CD8-positive, alpha-beta T cell (primary cell): ENCODE measurements at regions of chr4 and their contacts with region 1.

Region 1: DNA sequence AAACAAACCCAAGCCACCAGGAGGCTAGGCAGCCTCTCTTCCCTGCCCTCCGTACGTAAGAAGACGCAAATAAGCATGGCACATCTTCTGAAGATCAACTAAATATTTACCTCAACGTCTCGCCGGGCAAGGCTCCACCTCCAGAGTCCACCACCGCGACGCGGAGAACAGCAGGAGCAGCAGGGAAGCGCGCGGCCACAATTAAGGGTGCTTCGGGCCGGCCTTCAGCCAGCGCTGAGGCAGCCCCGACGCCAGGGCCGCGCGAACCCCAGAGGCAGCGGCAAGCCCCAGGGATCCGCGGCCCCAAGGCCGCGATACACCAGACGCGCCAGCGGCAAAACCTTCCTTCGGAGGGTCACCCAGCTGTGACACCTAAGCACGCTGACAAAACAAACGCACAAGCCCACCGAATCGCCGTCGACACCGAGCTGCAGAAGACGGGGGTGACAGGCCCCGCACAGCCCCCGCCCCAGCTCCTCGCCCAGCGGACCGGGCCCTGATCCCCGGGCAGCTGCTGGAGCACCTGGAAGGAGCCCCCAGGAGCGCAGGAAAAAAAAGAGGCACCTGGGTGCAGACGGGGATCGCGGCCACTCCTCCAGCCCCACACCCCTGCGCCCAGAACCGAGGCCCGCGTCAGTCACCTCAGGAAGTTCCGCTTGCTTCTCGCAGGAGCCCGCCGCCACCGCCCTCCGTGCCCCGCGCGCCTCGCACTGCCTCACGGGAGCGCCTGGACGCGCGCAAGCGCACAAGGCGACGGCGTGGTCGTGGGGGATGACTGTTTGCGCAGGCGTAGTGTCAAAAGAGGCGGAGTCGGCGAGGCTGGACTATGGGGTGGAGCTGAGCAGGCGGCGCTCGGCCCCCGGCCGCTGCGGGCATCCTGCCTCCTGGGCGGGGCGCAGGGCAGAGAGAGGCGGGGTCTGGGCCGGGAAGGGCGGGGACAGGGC is at the starts of genes HAUS3 and POLN:
- DNase-seq: peak; percentile 98 to 100 (median 99)
- ATAC-seq: peak; percentile 90
- H3K4me3 ChIP-seq: peak within 1 kb of the TSS; percentile 89 to 93
- H3K4me3 Mint-ChIP-seq: peak within 1 kb of the TSS; percentile 82
- H3K27ac ChIP-seq: peak within 1 kb of the TSS; percentile 86 to 88
- H3K27ac Mint-ChIP-seq: peak within 1 kb of the TSS; percentile 85
- H3K4me1 ChIP-seq: peaks cover 40% of the 10 kb centered on the region
- H3K4me1 Mint-ChIP-seq: peaks cover 56% of the 10 kb centered on the region
- H3K27me3 ChIP-seq: no peaks in the 10 kb centered on the region
- H3K27me3 Mint-ChIP-seq: no peaks in the 10 kb centered on the region
- CTCF ChIP-seq: no peak
- total RNA-seq, gene HAUS3: 154 TPM
- total RNA-seq, gene POLN: 0.89 to 1.7 TPM

Region 2: DNA sequence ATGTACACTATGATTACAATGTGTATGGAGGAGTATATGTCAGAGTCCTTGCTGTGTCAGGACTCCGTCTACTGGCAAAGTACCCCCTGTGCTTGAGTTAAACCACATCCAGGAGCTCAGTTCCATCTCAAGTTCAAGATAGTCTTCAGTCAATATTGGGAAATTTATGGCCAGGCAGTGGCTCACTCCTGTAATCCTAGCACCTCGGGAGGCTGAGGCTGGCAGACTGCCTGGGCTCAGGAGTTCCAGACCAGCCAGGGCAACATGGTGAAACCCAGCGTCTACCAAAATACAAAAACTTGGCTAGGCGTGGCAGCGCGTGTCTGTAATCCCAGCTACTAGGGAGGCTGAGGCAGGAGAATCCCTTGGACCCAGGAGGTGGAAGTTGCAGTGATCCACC is 535.3 kb before region 1 on chr4:
- CTCF ChIA-PET with region 1: no interaction called
- POLR2A ChIA-PET with region 1: no interaction called
- intact Hi-C with region 1: no loop called
- DNase-seq: no peak
- ATAC-seq: no peak
- H3K4me3 ChIP-seq: no peak overlapping the region
- H3K4me3 Mint-ChIP-seq: no peak overlapping the region
- H3K27ac ChIP-seq: no peak overlapping the region
- H3K27ac Mint-ChIP-seq: no peak overlapping the region
- H3K4me1 ChIP-seq: peaks cover 20% of the 10 kb centered on the region
- H3K4me1 Mint-ChIP-seq: peaks cover 58% of the 10 kb centered on the region
- H3K27me3 ChIP-seq: no peaks in the 10 kb centered on the region
- H3K27me3 Mint-ChIP-seq: no peaks in the 10 kb centered on the region
- CTCF ChIP-seq: no peak

Region 3: DNA sequence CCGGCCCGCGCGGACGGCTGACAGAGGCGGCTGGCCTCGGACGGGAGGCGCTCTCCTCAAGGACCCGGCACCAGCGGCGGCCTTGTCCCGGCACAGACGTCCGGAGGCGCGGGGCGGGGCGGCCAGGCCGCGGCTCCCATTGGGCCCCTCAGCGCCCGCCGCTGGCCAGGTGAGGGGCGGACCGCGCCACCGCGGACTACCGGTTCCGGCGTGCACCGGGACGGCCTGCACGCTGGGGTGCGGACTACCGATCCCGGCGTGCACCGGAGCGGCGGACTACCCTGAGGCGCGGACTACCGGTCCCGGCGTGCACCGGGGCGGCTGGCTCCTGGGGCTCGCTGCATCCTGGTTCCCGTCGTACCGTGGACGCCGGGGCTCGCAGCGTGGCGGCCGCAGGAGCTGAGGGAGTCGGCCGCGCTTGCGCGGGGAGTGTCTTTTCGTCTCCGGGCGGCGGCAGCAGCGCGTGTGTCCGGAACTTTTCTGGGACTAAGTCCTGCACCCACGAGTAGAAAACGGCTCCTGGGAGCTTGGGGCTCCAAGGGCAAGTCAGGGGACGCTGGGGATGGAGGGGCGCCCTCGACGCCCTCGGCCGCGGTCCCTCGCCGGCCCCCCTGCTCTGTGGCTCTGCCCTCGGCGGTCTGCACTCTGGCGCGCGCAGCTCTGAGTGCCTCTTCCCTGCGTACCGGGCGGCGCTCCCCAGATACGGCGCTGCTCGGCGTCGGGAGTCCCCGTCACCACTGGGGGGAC is 385.5 kb before region 1 on chr4 and contains the start of gene LETM1:
- CTCF ChIA-PET with region 1: no interaction called
- POLR2A ChIA-PET with region 1: no interaction called
- intact Hi-C with region 1: loop called in 1 of 2 experiments (anchors 10 kb)
- DNase-seq: peak; percentile 73 to 96 (median 92)
- ATAC-seq: peak; percentile 96
- H3K4me3 ChIP-seq: peak within 1 kb of the TSS; percentile 83 to 91
- H3K4me3 Mint-ChIP-seq: peak within 1 kb of the TSS; percentile 80
- H3K27ac ChIP-seq: peak within 1 kb of the TSS; percentile 47 to 50
- H3K27ac Mint-ChIP-seq: peak within 1 kb of the TSS; percentile 45
- H3K4me1 ChIP-seq: peaks cover 19% of the 10 kb centered on the region
- H3K4me1 Mint-ChIP-seq: peaks cover 44% of the 10 kb centered on the region
- H3K27me3 ChIP-seq: no peaks in the 10 kb centered on the region
- H3K27me3 Mint-ChIP-seq: no peaks in the 10 kb centered on the region
- CTCF ChIP-seq: no peak
- total RNA-seq, gene LETM1: 22.7 to 25.9 TPM

Region 4: DNA sequence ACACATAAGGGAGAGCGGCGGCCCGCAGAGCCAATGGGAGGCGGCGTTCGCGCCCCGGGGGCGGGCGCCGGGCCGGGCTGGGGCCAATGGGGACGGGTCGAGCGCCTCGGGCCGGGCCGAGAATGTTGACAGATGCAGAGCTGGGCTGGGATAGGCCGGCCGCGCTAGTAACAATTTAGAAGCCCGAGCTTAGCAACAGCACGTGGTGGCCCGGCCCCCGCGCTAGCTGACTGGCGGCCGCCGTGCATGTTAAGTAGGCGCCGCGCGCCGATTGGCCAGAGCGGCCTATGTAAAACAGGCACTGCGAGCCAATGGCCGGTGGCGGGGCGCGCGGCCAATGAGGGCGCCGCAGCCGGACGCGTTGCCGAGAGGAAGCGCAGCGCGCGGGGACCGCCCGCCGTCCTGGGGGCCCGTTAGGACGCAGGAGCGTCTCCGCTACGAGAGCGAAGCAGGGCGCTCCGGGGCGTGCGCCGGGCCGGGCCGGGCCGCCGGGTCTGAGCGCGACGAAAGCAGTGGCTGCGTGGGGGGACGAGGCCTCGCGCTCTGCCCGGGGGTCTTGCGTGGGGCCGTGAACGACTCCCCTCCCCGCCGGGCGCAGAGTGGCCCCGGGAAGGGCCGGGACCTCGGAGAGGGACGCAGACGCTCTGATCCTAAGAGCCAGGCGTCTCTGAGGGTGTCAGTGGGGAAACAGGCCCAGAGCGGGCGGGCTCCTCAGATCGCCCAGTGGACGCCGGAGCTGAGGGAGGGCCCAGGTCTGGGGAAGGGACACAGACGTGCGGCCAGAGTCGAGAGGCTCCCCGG is 20.7 kb after region 1 on chr4:
- CTCF ChIA-PET with region 1: interaction called, 6 read pairs
- POLR2A ChIA-PET with region 1: interaction called, 26 read pairs
- intact Hi-C with region 1: loop called (anchors 1 kb)
- DNase-seq: peak; percentile 95 to 99 (median 97)
- ATAC-seq: peak; percentile 87
- H3K4me3 ChIP-seq: peak overlapping the region; percentile 67 to 90
- H3K4me3 Mint-ChIP-seq: peak overlapping the region; percentile 78
- H3K27ac ChIP-seq: peak overlapping the region; percentile 93 to 95
- H3K27ac Mint-ChIP-seq: peak overlapping the region; percentile 85
- H3K4me1 ChIP-seq: peaks cover 25% of the 10 kb centered on the region
- H3K4me1 Mint-ChIP-seq: peaks cover 15% of the 10 kb centered on the region
- H3K27me3 ChIP-seq: no peaks in the 10 kb centered on the region
- H3K27me3 Mint-ChIP-seq: no peaks in the 10 kb centered on the region
- CTCF ChIP-seq: no peak

Region 5: DNA sequence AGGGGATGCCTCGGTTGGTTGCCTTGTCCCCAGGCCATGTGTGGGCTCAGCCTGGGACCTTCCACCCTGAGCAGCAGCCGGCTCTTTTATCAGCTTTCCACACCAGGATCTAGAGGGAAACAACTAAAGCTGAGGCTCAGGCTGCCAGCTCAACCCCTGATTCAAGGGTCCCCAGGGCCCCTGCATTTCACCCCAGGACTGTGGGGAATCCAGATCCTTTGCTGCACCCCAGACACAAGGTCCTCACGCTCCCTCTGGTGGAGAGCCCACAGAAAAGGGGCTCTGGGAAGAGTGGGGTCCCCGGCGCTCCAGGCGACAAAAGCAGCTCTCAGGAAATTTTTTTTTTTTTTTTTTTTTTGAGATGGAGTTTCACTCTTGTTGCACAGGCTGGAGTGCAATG is 112.4 kb after region 1 on chr4:
- CTCF ChIA-PET with region 1: interaction called, 10 read pairs
- POLR2A ChIA-PET with region 1: interaction called, 3 read pairs
- intact Hi-C with region 1: loop called in 1 of 2 experiments (anchors 5 kb)
- DNase-seq: peak in 6 of 9 experiments; percentile 35 to 70 (median 53)
- ATAC-seq: peak; percentile 73
- H3K4me3 ChIP-seq: no peak overlapping the region
- H3K4me3 Mint-ChIP-seq: no peak overlapping the region
- H3K27ac ChIP-seq: no peak overlapping the region
- H3K27ac Mint-ChIP-seq: no peak overlapping the region
- H3K4me1 ChIP-seq: peaks cover 15% of the 10 kb centered on the region
- H3K4me1 Mint-ChIP-seq: peaks cover 9% of the 10 kb centered on the region
- H3K27me3 ChIP-seq: no peaks in the 10 kb centered on the region
- H3K27me3 Mint-ChIP-seq: no peaks in the 10 kb centered on the region
- CTCF ChIP-seq: peak; percentile 49

Region 6: DNA sequence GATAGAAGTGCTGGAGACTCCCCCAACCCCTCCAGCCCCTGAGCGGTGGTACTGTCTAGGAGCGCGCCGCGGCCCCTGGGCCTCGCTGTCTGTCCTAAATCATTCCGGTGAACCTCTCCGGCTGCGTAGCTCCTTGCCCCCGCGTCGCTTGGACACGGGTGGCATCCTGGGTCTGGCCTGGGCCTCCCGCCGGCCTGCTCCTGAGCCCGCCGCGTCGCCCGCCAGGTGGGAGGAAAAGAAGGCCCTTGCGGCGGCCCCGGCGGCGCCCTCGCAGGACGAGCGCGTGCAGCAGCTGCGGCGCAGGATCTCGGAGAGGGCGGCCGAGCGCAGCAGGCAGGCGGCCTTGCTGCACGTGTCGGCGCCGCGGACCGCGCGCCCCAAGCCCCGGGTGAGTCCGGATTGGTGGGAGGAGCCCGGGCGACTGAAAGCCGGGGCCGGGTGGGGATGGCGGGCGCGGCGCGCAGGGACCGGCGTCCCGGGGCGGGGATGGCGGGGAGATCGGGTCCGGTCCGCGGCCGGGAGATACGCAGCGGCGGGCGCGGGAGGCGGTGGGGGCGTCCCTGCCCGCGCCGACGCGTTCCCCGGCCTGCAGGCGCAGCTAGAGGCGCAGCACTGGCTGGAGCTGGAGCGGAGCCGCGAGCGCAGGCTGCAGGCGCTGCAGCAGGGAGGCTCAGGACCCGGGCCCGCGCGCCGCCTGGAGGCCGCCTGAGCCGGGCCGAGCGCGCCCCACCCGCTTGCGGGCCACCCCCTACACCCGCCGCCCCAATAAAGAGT is 220.7 kb after region 1 on chr4:
- CTCF ChIA-PET with region 1: no interaction called
- POLR2A ChIA-PET with region 1: no interaction called
- intact Hi-C with region 1: loop called in 1 of 2 experiments (anchors 1 kb)
- DNase-seq: peak; percentile 31 to 87 (median 69)
- ATAC-seq: peak; percentile 96
- H3K4me3 ChIP-seq: peak overlapping the region in 1 of 2 experiments; percentile 50
- H3K4me3 Mint-ChIP-seq: peak overlapping the region; percentile 78
- H3K27ac ChIP-seq: no peak overlapping the region
- H3K27ac Mint-ChIP-seq: no peak overlapping the region
- H3K4me1 ChIP-seq: peaks cover 4% of the 10 kb centered on the region
- H3K4me1 Mint-ChIP-seq: peaks cover 10% of the 10 kb centered on the region
- H3K27me3 ChIP-seq: no peaks in the 10 kb centered on the region
- H3K27me3 Mint-ChIP-seq: no peaks in the 10 kb centered on the region
- CTCF ChIP-seq: peak; percentile 57

Region 7: DNA sequence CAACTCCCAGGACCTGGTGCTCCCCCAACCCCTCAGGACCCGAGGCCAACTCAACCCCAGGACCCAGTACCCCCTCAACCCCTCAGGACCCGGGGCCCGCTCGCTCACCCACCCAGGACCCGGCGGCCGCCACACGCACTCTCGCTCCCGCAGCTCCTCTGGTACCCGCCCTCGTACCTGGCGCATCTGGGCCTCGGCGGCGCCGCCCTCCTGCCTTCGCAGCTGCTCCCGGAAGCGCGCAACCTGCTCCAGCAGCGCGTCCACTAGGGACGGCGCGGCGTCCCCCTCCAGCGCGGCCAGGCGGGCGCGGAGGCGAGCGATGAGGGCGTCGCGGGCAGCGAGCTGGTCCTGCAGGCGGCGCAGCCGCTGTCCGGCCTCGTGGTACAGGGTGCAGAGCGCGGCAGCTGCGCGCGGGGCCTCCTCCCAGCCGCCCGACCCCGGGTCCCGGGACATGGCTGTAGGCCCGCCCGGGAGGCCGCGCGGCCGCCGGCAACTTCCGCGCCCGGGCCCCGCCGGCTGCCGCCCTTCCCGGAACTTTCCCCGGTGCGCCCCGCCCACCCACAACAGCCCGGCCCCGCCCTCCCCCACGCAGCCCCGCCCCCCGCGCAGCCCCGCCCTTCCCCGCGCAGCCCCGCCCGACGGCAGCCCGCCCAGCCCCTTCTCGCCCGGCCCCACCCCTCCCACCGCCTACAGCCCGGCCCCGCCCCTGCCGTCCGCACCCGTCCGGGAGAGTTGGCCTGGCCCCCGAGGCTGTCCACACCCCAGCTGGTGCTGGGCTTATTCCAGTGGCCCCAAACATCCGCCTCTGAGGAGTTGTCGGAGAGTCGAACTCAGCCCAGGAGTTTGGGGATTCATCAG is 514.4 kb after region 1 on chr4 and contains the start of gene TNIP2:
- CTCF ChIA-PET with region 1: no interaction called
- POLR2A ChIA-PET with region 1: no interaction called
- intact Hi-C with region 1: loop called in 1 of 2 experiments (anchors 10 kb)
- DNase-seq: peak; percentile 55 to 88 (median 75)
- ATAC-seq: peak; percentile 83
- H3K4me3 ChIP-seq: peak within 1 kb of the TSS; percentile 57 to 65
- H3K4me3 Mint-ChIP-seq: peak within 1 kb of the TSS; percentile 76
- H3K27ac ChIP-seq: peak within 1 kb of the TSS; percentile 19 to 63
- H3K27ac Mint-ChIP-seq: peak within 1 kb of the TSS; percentile 67
- H3K4me1 ChIP-seq: peaks cover 17% of the 10 kb centered on the region
- H3K4me1 Mint-ChIP-seq: peaks cover 37% of the 10 kb centered on the region
- H3K27me3 ChIP-seq: no peaks in the 10 kb centered on the region
- H3K27me3 Mint-ChIP-seq: no peaks in the 10 kb centered on the region
- CTCF ChIP-seq: peak; percentile 22
- total RNA-seq, gene TNIP2: 50.9 to 56.5 TPM

Region 8: GRCh38 chr4:3292571-3293400 is 1051.1 kb after region 1 on chr4 and contains the start of gene RGS12:
- CTCF ChIA-PET with region 1: no interaction called
- POLR2A ChIA-PET with region 1: no interaction called
- intact Hi-C with region 1: loop called in 1 of 2 experiments (anchors 5 kb)
- DNase-seq: peak; percentile 58 to 89 (median 78)
- ATAC-seq: peak; percentile 82
- H3K4me3 ChIP-seq: peak within 1 kb of the TSS; percentile 67 to 79
- H3K4me3 Mint-ChIP-seq: peak within 1 kb of the TSS; percentile 89
- H3K27ac ChIP-seq: no peak within 1 kb of the TSS
- H3K27ac Mint-ChIP-seq: peak within 1 kb of the TSS; percentile 82
- H3K4me1 ChIP-seq: peaks cover 14% of the 10 kb centered on the region
- H3K4me1 Mint-ChIP-seq: peaks cover 18% of the 10 kb centered on the region
- H3K27me3 ChIP-seq: peaks cover 0 to 4% of the 10 kb centered on the region in 2 experiments
- H3K27me3 Mint-ChIP-seq: peaks cover 20% of the 10 kb centered on the region
- CTCF ChIP-seq: no peak
- total RNA-seq, gene RGS12: 4.4 to 7.6 TPM